ENCODE measurements at regions of chr1 and their contacts with region 1.

Region 1: DNA sequence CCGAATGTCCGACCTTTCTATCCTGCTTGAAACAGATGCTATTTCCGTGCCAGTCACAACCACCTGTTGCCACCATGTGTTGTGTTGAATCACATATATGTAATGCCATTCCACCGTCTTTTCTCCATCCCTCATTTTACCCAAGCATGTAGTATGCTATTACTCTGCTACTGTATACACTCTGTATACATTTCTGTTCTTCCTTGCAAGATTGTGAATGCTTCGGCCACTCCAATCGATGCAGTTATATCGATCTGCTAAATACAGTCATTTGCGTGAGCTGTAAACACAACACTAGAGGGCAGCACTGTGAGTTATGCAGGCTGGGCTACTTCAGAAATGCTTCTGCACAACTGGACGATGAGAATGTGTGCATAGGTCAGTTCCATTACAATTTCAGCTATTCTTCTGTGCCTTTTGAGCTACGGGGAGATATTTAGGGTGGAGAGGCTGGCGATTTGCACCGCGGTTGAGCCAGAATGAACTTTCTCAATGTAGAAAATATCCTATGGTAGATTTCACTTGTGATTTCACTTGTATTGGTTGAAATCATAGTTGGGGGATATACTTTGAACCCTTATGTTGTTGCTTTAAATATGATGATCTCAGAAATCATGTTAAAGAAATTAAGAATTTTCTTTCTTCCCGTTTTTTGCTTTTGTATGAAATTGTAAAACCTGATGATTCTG is 289.8 kb downstream of the NTNG1 start:
- DNase-seq: peak; percentile 39
- ATAC-seq: peak; percentile 95
- H3K4me3 ChIP-seq: no peak overlapping the region
- H3K27ac ChIP-seq: no peak overlapping the region
- H3K4me1 ChIP-seq: peaks cover 6% of the 10 kb centered on the region; the same call in 1 of the 2 replicates
- H3K27me3 ChIP-seq: no peaks in the 10 kb centered on the region
- CTCF ChIP-seq: peak; percentile 71 to 86 (median 74)
- EP300 ChIP-seq: no peak
- POLR2A ChIP-seq: no peak
- RAD21 ChIP-seq: peak; percentile 92

Region 2: GRCh38 chr1:106957783-106958182 is 472.9 kb before region 1 on chr1:
- CTCF ChIA-PET with region 1: no interaction called
- POLR2A ChIA-PET with region 1: no interaction called
- RAD21 ChIA-PET with region 1: no interaction called
- SMC1A ChIA-PET with region 1: no interaction called
- in situ Hi-C with region 1: no loop called
- intact Hi-C with region 1: no loop called
- DNase-seq: no peak
- ATAC-seq: no peak
- H3K4me3 ChIP-seq: no peak overlapping the region
- H3K27ac ChIP-seq: no peak overlapping the region
- H3K4me1 ChIP-seq: no peaks in the 10 kb centered on the region
- H3K27me3 ChIP-seq: no peaks in the 10 kb centered on the region; a peak in 1 of 4 replicates
- CTCF ChIP-seq: peak; percentile 16 to 27 (median 18); a peak in 4 of 6 replicates
- EP300 ChIP-seq: no peak
- POLR2A ChIP-seq: no peak
- RAD21 ChIP-seq: peak; percentile 48

Region 3: DNA sequence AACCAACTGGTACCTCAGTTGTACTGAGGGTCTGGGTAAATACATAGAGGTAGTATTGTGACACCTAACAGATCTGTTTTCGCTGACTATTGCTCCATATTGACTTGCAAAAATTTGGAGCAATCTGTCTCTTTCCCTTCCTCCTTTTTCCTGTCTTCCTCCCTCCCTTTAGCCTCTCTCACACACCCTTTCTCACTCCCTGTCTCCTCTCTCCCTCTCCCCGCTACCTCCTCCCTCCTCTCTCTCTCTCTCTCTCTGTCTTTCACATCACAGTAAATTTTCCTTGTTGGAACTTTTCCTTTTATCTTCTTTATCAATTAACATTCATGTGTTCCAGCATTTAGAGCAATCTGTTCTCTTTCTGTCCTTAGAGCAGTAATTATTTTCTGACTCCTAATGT is 11.7 kb before region 1 on chr1:
- CTCF ChIA-PET with region 1: interaction called, 13 read pairs
- POLR2A ChIA-PET with region 1: no interaction called
- RAD21 ChIA-PET with region 1: interaction called, 4 read pairs
- SMC1A ChIA-PET with region 1: interaction called, 9 read pairs
- in situ Hi-C with region 1: no loop called
- intact Hi-C with region 1: no loop called
- DNase-seq: no peak
- ATAC-seq: no peak
- H3K4me3 ChIP-seq: no peak overlapping the region
- H3K27ac ChIP-seq: no peak overlapping the region
- H3K4me1 ChIP-seq: no peaks in the 10 kb centered on the region
- H3K27me3 ChIP-seq: no peaks in the 10 kb centered on the region
- CTCF ChIP-seq: no peak
- EP300 ChIP-seq: no peak
- POLR2A ChIP-seq: no peak
- RAD21 ChIP-seq: no peak

Region 4: DNA sequence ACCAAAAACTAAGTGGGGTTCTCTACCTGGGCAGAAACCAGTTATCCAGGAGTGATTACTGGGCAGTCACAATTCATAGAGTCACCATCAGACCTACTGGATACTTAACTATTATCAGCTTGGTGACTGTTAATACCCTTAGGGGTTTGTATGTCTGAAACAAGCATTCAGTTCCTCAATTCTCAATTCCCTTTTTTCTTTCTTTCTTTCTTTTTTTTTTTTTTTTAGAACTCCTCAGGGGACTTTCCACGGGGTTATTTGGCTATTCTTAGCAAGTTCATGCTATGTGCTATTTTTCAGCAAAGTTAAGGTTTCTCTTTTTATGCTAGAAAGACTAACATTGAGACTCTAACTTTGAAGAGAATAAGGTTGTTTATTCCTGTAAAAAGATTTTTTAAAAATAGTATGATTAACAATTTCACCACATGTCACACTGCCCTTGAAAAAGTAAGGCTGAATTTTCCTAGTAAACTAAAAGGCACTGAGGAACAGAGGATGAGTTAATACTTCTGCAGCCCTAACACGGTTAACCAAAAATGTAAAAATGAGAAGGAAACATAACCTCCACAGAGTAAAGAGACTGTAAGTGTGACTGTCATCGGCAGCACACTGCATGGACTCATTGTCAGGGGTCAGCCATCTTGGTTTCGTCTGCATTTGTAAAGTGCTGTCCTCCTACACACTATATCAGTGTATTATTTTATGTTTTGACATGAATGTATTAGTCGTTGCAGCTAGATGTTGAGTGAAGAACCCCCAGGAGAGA is 20.4 kb after region 1 on chr1:
- CTCF ChIA-PET with region 1: interaction called, 110 read pairs
- POLR2A ChIA-PET with region 1: interaction called, 6 read pairs
- RAD21 ChIA-PET with region 1: interaction called, 93 read pairs
- SMC1A ChIA-PET with region 1: interaction called, 92 read pairs
- in situ Hi-C with region 1: no loop called
- intact Hi-C with region 1: loop called (anchors 2 kb)
- DNase-seq: peak; percentile 72
- ATAC-seq: peak; percentile 93
- H3K4me3 ChIP-seq: peak overlapping the region; percentile 45; the same call in 1 of the 2 replicates
- H3K27ac ChIP-seq: peak overlapping the region; percentile 96
- H3K4me1 ChIP-seq: peaks cover 29% of the 10 kb centered on the region
- H3K27me3 ChIP-seq: no peaks in the 10 kb centered on the region
- CTCF ChIP-seq: no peak
- EP300 ChIP-seq: peak; percentile 80 to 91; a peak in 3 of 4 replicates
- POLR2A ChIP-seq: peak; percentile 59
- RAD21 ChIP-seq: no peak

Region 5: DNA sequence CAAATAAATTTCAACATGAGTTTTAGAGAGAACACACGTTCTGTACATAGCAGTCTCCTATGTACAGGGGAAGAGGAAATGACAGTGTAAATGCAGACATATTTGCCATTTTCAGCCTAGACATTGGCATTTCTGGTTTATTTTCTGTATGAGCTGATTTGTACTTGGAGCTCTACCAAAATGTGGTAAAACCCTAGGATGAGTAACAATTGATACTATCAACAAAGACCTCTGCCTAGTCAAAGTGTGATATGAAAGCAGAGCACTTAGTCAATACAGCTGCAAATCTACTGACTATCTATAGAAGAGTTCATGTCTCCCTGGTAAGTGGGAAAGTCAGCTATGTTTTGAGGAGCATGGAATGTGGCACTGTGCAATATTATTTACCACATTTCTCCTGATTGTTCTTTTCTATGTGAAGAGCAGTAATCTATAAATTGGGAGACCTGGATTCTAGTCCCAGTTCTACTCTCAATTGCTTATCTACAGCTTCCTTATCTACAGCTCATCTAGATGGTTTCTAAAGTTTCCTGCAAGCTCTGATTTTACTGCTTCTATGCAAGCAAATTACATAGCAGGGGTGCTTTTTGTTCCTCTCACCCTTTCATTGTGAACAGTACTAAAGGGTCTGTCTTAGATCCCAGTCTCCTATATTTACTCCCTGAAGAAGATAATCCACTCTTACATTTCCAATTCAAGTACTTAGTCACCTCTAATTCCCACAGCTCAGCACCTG is 44.4 kb after region 1 on chr1:
- CTCF ChIA-PET with region 1: interaction called, 124 read pairs
- POLR2A ChIA-PET with region 1: interaction called, 3 read pairs
- RAD21 ChIA-PET with region 1: interaction called, 30 read pairs
- SMC1A ChIA-PET with region 1: interaction called, 156 read pairs
- in situ Hi-C with region 1: no loop called
- intact Hi-C with region 1: loop called (anchors 2 kb)
- DNase-seq: no peak
- ATAC-seq: peak; percentile 84
- H3K4me3 ChIP-seq: no peak overlapping the region
- H3K27ac ChIP-seq: no peak overlapping the region
- H3K4me1 ChIP-seq: peaks cover 5% of the 10 kb centered on the region; the same call in 1 of the 2 replicates
- H3K27me3 ChIP-seq: no peaks in the 10 kb centered on the region
- CTCF ChIP-seq: no peak
- EP300 ChIP-seq: no peak
- POLR2A ChIP-seq: no peak
- RAD21 ChIP-seq: no peak

Region 6: GRCh38 chr1:107491582-107491981 is 60.9 kb after region 1 on chr1:
- CTCF ChIA-PET with region 1: interaction called, 53 read pairs
- POLR2A ChIA-PET with region 1: no interaction called
- RAD21 ChIA-PET with region 1: interaction called, 6 read pairs
- SMC1A ChIA-PET with region 1: interaction called, 33 read pairs
- in situ Hi-C with region 1: no loop called
- intact Hi-C with region 1: no loop called
- DNase-seq: no peak
- ATAC-seq: peak; percentile 79
- H3K4me3 ChIP-seq: no peak overlapping the region
- H3K27ac ChIP-seq: no peak overlapping the region
- H3K4me1 ChIP-seq: no peaks in the 10 kb centered on the region
- H3K27me3 ChIP-seq: no peaks in the 10 kb centered on the region
- CTCF ChIP-seq: no peak
- EP300 ChIP-seq: no peak
- POLR2A ChIP-seq: no peak
- RAD21 ChIP-seq: no peak

Region 7: DNA sequence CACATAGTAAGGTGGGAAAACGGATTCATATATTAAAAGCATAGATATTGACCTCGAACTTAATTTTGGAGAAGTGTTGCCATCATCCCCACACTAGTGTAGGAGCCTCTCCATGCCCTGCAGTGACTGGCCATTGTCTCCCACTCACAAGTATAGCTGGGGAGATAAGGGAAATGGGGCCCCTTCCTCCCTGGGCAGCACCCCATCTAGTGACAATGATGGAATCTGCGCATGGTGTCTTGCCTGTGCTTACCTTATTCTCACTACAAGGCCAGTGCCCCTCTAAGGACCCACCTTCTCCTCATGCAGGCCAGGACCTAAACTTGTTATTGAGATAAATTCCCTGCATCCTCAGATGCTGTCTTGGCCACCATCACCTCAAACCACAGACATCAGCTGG is 85.0 kb after region 1 on chr1:
- CTCF ChIA-PET with region 1: interaction called, 33 read pairs
- POLR2A ChIA-PET with region 1: no interaction called
- RAD21 ChIA-PET with region 1: interaction called, 19 read pairs
- SMC1A ChIA-PET with region 1: interaction called, 14 read pairs
- in situ Hi-C with region 1: loop called (anchors 10 kb)
- intact Hi-C with region 1: no loop called
- DNase-seq: no peak
- ATAC-seq: peak; percentile 52
- H3K4me3 ChIP-seq: no peak overlapping the region
- H3K27ac ChIP-seq: no peak overlapping the region
- H3K4me1 ChIP-seq: no peaks in the 10 kb centered on the region
- H3K27me3 ChIP-seq: no peaks in the 10 kb centered on the region; a peak in 1 of 4 replicates
- CTCF ChIP-seq: peak in 2 of 3 experiments; percentile 32 to 35; a peak in 3 of 6 replicates
- EP300 ChIP-seq: no peak
- POLR2A ChIP-seq: no peak
- RAD21 ChIP-seq: peak; percentile 36

Region 8: GRCh38 chr1:107599220-107599619 is 168.5 kb after region 1 on chr1:
- CTCF ChIA-PET with region 1: no interaction called
- POLR2A ChIA-PET with region 1: no interaction called
- RAD21 ChIA-PET with region 1: no interaction called
- SMC1A ChIA-PET with region 1: no interaction called
- in situ Hi-C with region 1: no loop called
- intact Hi-C with region 1: no loop called
- DNase-seq: no peak
- ATAC-seq: no peak
- H3K4me3 ChIP-seq: no peak overlapping the region
- H3K27ac ChIP-seq: no peak overlapping the region
- H3K4me1 ChIP-seq: no peaks in the 10 kb centered on the region
- H3K27me3 ChIP-seq: no peaks in the 10 kb centered on the region
- CTCF ChIP-seq: no peak
- EP300 ChIP-seq: no peak
- POLR2A ChIP-seq: no peak
- RAD21 ChIP-seq: no peak